ENCODE measurements at regions of chr16 and their contacts with region 1.

Region 1: GRCh38 chr16:81006814-81007696 is at the starts of genes CENPN and CMC2:
- DNase-seq: peak; percentile 98
- ATAC-seq: peak; percentile 91
- H3K4me3 ChIP-seq: peak within 1 kb of the TSS; percentile 90 to 99 (median 90)
- H3K27ac ChIP-seq: peak within 1 kb of the TSS; percentile 99
- H3K4me1 ChIP-seq: peaks cover 35% of the 10 kb centered on the region
- H3K27me3 ChIP-seq: no peaks in the 10 kb centered on the region; a peak in 1 of 5 replicates
- CTCF ChIP-seq: peak; percentile 47; the same call in 1 of the 2 replicates
- EP300 ChIP-seq: peak in 1 of 2 experiments; percentile 4; a peak in 1 of 4 replicates
- POLR2A ChIP-seq: peak; percentile 76 to 80
- RAD21 ChIP-seq: no peak; the same call in 1 of the 2 replicates
- total RNA-seq, gene CENPN: 129 and 193 TPM in 2 replicates
- total RNA-seq, gene CMC2: 129 and 147 TPM in 2 replicates

Region 2: GRCh38 chr16:80974649-80975376 is 32.2 kb before region 1 on chr16:
- CTCF ChIA-PET with region 1: interaction called, 6 read pairs
- POLR2A ChIA-PET with region 1: interaction called, 4 read pairs
- in situ Hi-C with region 1: no loop called
- intact Hi-C with region 1: loop called (anchors 2 kb)
- DNase-seq: no peak
- ATAC-seq: peak; percentile 71
- H3K4me3 ChIP-seq: no peak overlapping the region
- H3K27ac ChIP-seq: no peak overlapping the region
- H3K4me1 ChIP-seq: no peaks in the 10 kb centered on the region
- H3K27me3 ChIP-seq: no peaks in the 10 kb centered on the region
- CTCF ChIP-seq: peak; percentile 30
- EP300 ChIP-seq: no peak
- POLR2A ChIP-seq: no peak
- RAD21 ChIP-seq: no peak

Region 3: DNA sequence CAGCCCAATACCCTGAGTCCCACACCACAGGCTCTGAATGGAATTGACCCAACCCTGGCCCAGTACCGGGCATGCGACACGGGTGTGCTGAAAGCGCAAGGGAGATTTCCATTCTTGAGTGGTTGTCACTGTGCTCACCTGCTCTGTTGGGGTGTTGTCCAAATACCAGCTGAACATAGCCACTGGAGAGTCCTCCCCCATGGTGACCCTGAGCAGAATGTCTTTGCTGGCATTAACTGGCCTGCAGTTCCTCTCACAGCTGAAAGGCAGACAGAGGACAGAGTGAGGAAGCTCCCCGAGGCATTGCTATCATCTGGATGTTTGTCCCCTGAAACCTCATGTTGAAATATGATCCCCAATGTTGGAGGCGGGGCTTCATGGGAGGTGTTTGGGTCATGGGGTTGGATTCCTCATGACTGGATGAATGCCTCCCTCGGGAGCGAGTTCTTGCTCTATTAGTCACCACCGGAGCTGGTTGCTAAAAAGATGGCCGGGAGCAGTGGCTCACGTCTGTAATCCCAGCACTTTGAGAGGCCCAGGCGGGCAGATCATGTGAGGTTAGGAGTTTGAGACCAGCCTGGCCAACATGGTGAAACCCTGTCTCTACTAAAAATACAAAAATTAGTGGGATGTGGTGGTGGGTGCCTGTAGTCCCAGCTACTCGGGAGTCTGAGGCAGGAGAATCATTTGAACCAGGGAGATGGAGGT is 174.1 kb after region 1 on chr16:
- CTCF ChIA-PET with region 1: no interaction called
- POLR2A ChIA-PET with region 1: no interaction called
- in situ Hi-C with region 1: no loop called
- intact Hi-C with region 1: no loop called
- DNase-seq: peak; percentile 98
- ATAC-seq: peak; percentile 94
- H3K4me3 ChIP-seq: peak overlapping the region in 2 of 3 experiments; percentile 17 to 44; a peak in 3 of 6 replicates
- H3K27ac ChIP-seq: peak overlapping the region; percentile 4
- H3K4me1 ChIP-seq: peaks cover 34% of the 10 kb centered on the region
- H3K27me3 ChIP-seq: peaks cover 0 to 1% of the 10 kb centered on the region in 2 experiments; a peak in 1 of 5 replicates
- CTCF ChIP-seq: no peak
- EP300 ChIP-seq: no peak; a peak in 1 of 4 replicates
- POLR2A ChIP-seq: no peak
- RAD21 ChIP-seq: no peak

Region 4: DNA sequence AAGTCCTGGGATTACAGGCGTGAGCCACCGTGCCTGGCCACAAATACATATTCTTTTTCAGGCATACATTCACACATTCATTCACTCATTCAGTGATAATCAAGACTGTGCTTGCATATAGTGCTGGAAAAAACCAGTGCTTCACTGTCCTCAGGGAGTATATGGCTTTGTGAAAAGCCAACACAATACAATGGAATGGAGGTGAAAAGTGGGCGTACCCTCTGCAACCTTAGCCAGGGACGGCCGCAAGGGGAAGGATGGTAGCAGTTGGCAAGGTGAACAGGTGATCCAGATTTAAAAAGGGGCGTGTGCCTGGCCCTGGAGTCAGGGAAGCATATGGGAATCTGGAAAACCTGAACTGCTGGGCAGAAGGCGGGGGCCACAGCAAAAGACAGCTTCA is 289.6 kb after region 1 on chr16:
- CTCF ChIA-PET with region 1: no interaction called
- POLR2A ChIA-PET with region 1: no interaction called
- in situ Hi-C with region 1: no loop called
- intact Hi-C with region 1: no loop called
- DNase-seq: no peak
- ATAC-seq: no peak
- H3K4me3 ChIP-seq: no peak overlapping the region
- H3K27ac ChIP-seq: no peak overlapping the region
- H3K4me1 ChIP-seq: no peaks in the 10 kb centered on the region
- H3K27me3 ChIP-seq: peaks cover 1 to 10% of the 10 kb centered on the region in 2 experiments; a peak in 1 of 5 replicates
- CTCF ChIP-seq: no peak
- EP300 ChIP-seq: no peak
- POLR2A ChIP-seq: no peak
- RAD21 ChIP-seq: no peak

Measured in HepG2 (cell line).